PC-3 (cell line): ENCODE measurements at regions of chr3 and their contacts with region 1.

Region 1: GRCh38 chr3:185084901-185085300 is 68.0 kb downstream of the C3orf70 start:
- DNase-seq: peak; percentile 29
- ATAC-seq: peak; percentile 37
- H3K4me3 ChIP-seq: no peak overlapping the region
- H3K27ac ChIP-seq: no peak overlapping the region
- H3K4me1 ChIP-seq: no peaks in the 10 kb centered on the region
- H3K27me3 ChIP-seq: peaks cover 64% of the 10 kb centered on the region
- CTCF ChIP-seq: peak; percentile 25; the same call in 1 of the 2 replicates

Region 2: DNA sequence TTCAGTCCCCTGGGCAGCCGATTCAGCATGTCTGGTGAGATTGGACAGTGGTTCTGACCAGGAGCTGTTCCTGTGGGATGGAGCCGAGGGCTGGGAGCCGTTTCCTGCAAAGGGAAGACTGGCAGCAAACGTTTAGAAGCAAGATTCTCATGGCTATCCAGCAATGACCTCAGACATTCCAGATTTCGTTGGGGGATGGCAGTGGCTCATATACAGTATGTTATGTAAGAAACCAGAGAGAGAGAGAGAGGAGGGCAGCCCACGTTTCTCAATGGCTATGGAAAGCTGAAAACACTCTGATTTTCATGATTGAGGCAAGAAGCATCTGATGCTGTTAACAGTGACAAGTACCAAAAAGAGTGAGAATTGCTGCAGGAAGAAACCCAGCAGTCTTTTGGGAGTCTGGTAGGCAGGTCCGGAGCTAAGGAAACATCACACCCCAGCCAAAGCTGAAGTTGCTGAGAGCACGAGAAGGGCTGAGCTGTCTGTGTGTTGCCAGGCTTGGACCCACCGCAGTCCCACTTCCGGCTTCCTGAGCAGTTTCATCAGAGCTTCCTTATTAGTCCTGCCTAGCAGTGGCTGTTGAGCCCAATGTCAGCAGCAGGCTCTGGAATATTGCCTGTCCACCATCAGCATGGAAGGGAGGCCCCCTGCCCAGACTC is 298.5 kb before region 1 on chr3:
- CTCF ChIA-PET with region 1: no interaction called
- POLR2A ChIA-PET with region 1: no interaction called
- intact Hi-C with region 1: no loop called
- DNase-seq: no peak
- ATAC-seq: no peak
- H3K4me3 ChIP-seq: no peak overlapping the region
- H3K27ac ChIP-seq: no peak overlapping the region
- H3K4me1 ChIP-seq: peaks cover 8% of the 10 kb centered on the region; the same call in 1 of the 2 replicates
- H3K27me3 ChIP-seq: no peaks in the 10 kb centered on the region
- CTCF ChIP-seq: no peak

Region 3: DNA sequence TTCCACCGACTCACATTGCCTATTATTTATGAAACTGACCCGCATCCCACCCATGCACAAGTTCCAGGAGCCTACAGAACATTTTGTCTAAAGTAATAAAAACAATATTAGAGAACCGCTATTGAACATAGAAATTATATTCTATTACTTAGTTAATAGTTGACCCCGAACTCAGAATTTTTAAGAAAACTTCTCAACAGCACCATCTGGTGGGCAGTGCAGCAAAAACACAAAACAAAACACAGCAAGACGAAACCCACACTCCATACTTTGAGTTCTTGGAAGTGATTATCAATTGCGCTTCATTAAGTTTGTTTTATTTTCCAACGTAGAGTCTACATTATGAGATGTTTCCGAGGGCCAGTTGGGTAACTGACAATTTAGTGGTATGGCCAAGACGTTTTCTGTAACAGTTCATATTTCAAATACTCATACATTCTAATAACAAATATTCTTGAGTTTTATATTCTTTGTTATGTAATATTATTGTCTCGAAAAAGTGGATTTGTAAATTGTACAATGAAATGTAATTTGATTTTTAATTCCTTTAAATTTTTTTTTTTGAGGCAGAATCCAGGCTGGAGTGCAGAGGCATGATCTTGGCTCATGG is 92.0 kb after region 1 on chr3:
- CTCF ChIA-PET with region 1: no interaction called
- POLR2A ChIA-PET with region 1: no interaction called
- intact Hi-C with region 1: loop called (anchors 5 kb)
- DNase-seq: peak; percentile 70
- ATAC-seq: peak; percentile 31; the same call in 1 of the 2 replicates
- H3K4me3 ChIP-seq: no peak overlapping the region
- H3K27ac ChIP-seq: no peak overlapping the region
- H3K4me1 ChIP-seq: no peaks in the 10 kb centered on the region
- H3K27me3 ChIP-seq: peaks cover 37% of the 10 kb centered on the region
- CTCF ChIP-seq: peak; percentile 84

Region 4: DNA sequence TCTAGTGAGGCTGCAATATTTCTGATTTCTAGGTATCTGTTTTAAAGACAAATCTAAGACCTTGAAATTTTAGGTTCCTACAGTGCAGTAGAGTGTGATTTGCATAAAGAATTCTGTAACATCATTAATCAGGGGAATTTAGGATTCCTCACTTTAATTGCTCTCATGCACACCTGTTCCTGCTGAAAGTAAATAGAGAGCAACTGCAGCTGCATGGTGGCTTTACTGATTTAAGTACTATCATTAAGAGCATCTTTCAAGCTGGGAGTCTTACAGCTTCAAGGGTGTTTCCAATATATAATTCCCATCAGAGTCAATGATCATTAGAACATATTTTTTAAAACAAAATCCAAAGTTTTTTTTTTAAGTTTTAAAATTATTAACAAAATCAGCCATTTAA is 103.9 kb after region 1 on chr3:
- CTCF ChIA-PET with region 1: no interaction called
- POLR2A ChIA-PET with region 1: no interaction called
- intact Hi-C with region 1: no loop called
- DNase-seq: no peak
- ATAC-seq: no peak
- H3K4me3 ChIP-seq: no peak overlapping the region
- H3K27ac ChIP-seq: no peak overlapping the region
- H3K4me1 ChIP-seq: no peaks in the 10 kb centered on the region
- H3K27me3 ChIP-seq: no peaks in the 10 kb centered on the region
- CTCF ChIP-seq: no peak

Region 5: DNA sequence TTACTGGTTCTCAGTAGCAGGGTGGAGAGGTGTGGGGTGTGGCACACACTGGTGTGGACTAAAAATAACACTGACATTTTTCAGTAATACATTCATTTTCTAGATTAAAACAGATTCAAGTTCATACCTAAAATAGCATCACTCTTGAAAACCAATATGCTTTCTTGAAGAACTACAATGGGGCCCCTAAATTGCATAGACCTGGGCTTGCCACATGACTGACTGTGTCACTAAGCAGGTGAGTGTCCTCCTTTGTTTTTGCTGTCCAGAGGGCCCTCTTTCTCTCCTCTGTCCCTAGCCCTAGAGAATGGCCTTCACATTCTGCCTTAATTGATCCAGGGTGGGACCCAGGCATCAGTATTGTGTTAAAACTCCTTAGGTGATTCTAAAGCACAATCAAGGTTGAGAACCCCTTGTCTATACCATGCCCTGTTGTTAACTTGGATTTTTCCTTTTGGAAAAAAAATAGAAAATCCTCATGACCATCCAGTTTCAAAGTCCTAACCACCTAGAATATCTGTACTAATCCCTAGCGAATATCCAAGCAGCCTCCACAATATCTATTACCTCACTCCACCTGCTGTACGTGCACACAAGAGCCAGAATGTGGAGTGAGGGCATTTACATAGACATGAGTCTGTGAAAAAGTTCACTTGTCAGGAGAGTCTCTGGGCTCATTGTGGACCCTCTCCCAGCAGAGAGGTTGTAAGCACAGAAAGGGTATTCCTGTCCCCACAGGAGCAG is 432.7 kb after region 1 on chr3:
- CTCF ChIA-PET with region 1: no interaction called
- POLR2A ChIA-PET with region 1: no interaction called
- intact Hi-C with region 1: no loop called
- DNase-seq: no peak
- ATAC-seq: no peak
- H3K4me3 ChIP-seq: no peak overlapping the region
- H3K27ac ChIP-seq: no peak overlapping the region
- H3K4me1 ChIP-seq: no peaks in the 10 kb centered on the region
- H3K27me3 ChIP-seq: no peaks in the 10 kb centered on the region
- CTCF ChIP-seq: no peak